MCF 10A (cell line): ENCODE measurements at regions of chr5 and their contacts with region 1.

Region 1: GRCh38 chr5:127572930-127573329 is 55.5 kb downstream of the PRRC1 start:
- DNase-seq: peak; percentile 35
- H3K4me3 Mint-ChIP-seq: no peak overlapping the region
- H3K27ac Mint-ChIP-seq: no peak overlapping the region
- H3K4me1 Mint-ChIP-seq: peaks cover 11% of the 10 kb centered on the region
- H3K27me3 Mint-ChIP-seq: peaks cover 6% of the 10 kb centered on the region
- CTCF ChIP-seq: peak; percentile 32

Region 2: DNA sequence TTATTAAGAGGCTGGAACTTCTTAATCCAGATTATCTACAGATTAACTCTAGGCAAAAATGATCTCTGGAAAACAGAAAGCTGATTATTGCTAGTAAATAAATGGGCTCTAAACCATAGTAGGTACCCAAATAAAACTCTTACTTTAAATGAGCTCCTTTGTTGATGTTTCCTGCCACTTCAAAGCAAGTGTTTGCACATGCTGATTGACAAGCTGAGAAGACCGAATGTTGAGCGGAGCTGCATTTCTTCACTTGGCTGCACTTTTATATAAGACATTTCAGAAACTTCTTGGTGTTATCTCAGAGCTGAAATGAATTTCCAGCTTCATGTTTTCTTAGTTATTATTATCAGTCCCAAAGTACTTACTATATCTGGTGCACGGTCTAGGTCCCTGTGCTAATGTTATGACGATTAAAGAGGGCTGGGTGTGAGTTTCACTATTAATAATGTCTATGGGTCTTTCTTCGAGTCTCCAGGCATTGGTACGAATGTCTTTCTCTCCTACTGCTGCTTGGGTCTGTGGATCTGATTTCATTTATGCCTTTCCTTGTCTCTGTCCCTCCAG is 17.3 kb after region 1 on chr5:
- CTCF ChIA-PET with region 1: interaction called, 17 read pairs
- POLR2A ChIA-PET with region 1: no interaction called
- intact Hi-C with region 1: no loop called
- DNase-seq: no peak
- H3K4me3 Mint-ChIP-seq: no peak overlapping the region
- H3K27ac Mint-ChIP-seq: no peak overlapping the region
- H3K4me1 Mint-ChIP-seq: no peaks in the 10 kb centered on the region
- H3K27me3 Mint-ChIP-seq: no peaks in the 10 kb centered on the region
- CTCF ChIP-seq: no peak